ENCODE measurements at regions of chr11 and their contacts with region 1.

Region 1: GRCh38 chr11:82012276-82012675 is 721.4 kb downstream of the FAM181B start:
- DNase-seq: no peak
- ATAC-seq: no peak
- H3K4me3 ChIP-seq: no peak overlapping the region
- H3K27ac ChIP-seq: no peak overlapping the region
- H3K4me1 ChIP-seq: no peaks in the 10 kb centered on the region
- H3K27me3 ChIP-seq: no peaks in the 10 kb centered on the region
- CTCF ChIP-seq: no peak

Region 2: DNA sequence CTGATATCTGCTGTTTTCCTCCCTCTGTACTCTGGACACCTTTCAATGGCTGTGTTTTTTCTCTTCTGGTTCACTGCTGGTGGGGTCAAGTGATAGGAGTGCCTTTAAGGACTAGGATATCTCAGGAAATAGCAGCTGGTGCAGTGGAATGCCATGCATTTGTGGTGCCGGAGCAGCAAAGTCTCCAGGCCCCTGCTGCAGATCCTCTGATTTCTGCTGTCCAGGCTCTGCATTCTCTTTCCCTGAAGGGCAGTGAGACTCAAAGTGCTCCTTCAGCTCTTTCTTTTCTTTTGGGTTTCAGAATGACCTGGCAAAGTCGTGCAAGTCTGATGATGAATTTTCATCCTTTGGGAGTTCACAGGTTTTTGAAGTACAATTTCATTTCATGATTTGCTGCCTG is 52.9 kb before region 1 on chr11:
- intact Hi-C with region 1: loop called in 1 of 10 experiments (anchors 10 kb)
- DNase-seq: no peak
- ATAC-seq: no peak
- H3K4me3 ChIP-seq: no peak overlapping the region
- H3K27ac ChIP-seq: no peak overlapping the region
- H3K4me1 ChIP-seq: no peaks in the 10 kb centered on the region
- H3K27me3 ChIP-seq: no peaks in the 10 kb centered on the region
- CTCF ChIP-seq: no peak

Region 3: GRCh38 chr11:82024760-82025159 is 12.5 kb after region 1 on chr11:
- intact Hi-C with region 1: no loop called
- DNase-seq: no peak
- ATAC-seq: no peak
- H3K4me3 ChIP-seq: no peak overlapping the region
- H3K27ac ChIP-seq: no peak overlapping the region
- H3K4me1 ChIP-seq: no peaks in the 10 kb centered on the region
- H3K27me3 ChIP-seq: no peaks in the 10 kb centered on the region
- CTCF ChIP-seq: no peak

Measured in heart right ventricle (tissue), 16 donors.